CD8-positive, alpha-beta memory T cell (primary cell): ENCODE measurements at regions of chr20 and their contacts with region 1.

Region 1: GRCh38 chr20:34768096-34768495 is 57.4 kb downstream of the NCOA6 start:
- DNase-seq: no peak
- H3K4me3 ChIP-seq: no peak overlapping the region
- H3K4me3 Mint-ChIP-seq: no peak overlapping the region
- H3K27ac ChIP-seq: no peak overlapping the region
- H3K27ac Mint-ChIP-seq: no peak overlapping the region
- H3K4me1 ChIP-seq: no peaks in the 10 kb centered on the region
- H3K4me1 Mint-ChIP-seq: peaks cover 0 to 3% (median 2%) of the 10 kb centered on the region in 3 donors
- H3K27me3 ChIP-seq: no peaks in the 10 kb centered on the region
- H3K27me3 Mint-ChIP-seq: no peaks in the 10 kb centered on the region

Region 2: GRCh38 chr20:33832103-33832804 is 935.8 kb before region 1 on chr20:
- CTCF ChIA-PET with region 1: no interaction called
- POLR2A ChIA-PET with region 1: no interaction called
- DNase-seq: no peak
- H3K4me3 ChIP-seq: no peak overlapping the region
- H3K4me3 Mint-ChIP-seq: no peak overlapping the region
- H3K27ac ChIP-seq: no peak overlapping the region
- H3K27ac Mint-ChIP-seq: no peak overlapping the region
- H3K4me1 ChIP-seq: peaks cover 22% of the 10 kb centered on the region
- H3K4me1 Mint-ChIP-seq: peaks cover 64 to 89% (median 88%) of the 10 kb centered on the region in 3 donors
- H3K27me3 ChIP-seq: no peaks in the 10 kb centered on the region
- H3K27me3 Mint-ChIP-seq: no peaks in the 10 kb centered on the region

Region 3: GRCh38 chr20:34755367-34755766 is 12.7 kb before region 1 on chr20:
- CTCF ChIA-PET with region 1: interaction called, 14 read pairs
- POLR2A ChIA-PET with region 1: no interaction called
- DNase-seq: no peak
- H3K4me3 ChIP-seq: no peak overlapping the region
- H3K4me3 Mint-ChIP-seq: no peak overlapping the region
- H3K27ac ChIP-seq: no peak overlapping the region
- H3K27ac Mint-ChIP-seq: no peak overlapping the region
- H3K4me1 ChIP-seq: no peaks in the 10 kb centered on the region
- H3K4me1 Mint-ChIP-seq: peaks cover 0 to 6% (median 4%) of the 10 kb centered on the region in 3 donors
- H3K27me3 ChIP-seq: no peaks in the 10 kb centered on the region
- H3K27me3 Mint-ChIP-seq: no peaks in the 10 kb centered on the region

Region 4: GRCh38 chr20:34968042-34968775 is 200.1 kb after region 1 on chr20:
- CTCF ChIA-PET with region 1: no interaction called
- POLR2A ChIA-PET with region 1: no interaction called
- DNase-seq: no peak
- H3K4me3 ChIP-seq: no peak overlapping the region
- H3K4me3 Mint-ChIP-seq: no peak overlapping the region
- H3K27ac ChIP-seq: no peak overlapping the region
- H3K27ac Mint-ChIP-seq: no peak overlapping the region
- H3K4me1 ChIP-seq: no peaks in the 10 kb centered on the region
- H3K4me1 Mint-ChIP-seq: no peaks in the 10 kb centered on the region
- H3K27me3 ChIP-seq: no peaks in the 10 kb centered on the region
- H3K27me3 Mint-ChIP-seq: peaks cover 1 to 3% of the 10 kb centered on the region in 2 donors